ENCODE measurements at regions of chr12 and their contacts with region 1.

Region 1: GRCh38 chr12:9707864-9708808 is 24.8 kb downstream of the CLECL1 start:
- DNase-seq: peak; percentile 47 to 86 (median 68)
- ATAC-seq: peak; percentile 75 to 84 (median 82)
- H3K4me3 ChIP-seq: peak overlapping the region in 1 of 2 donors; percentile 29
- H3K4me3 Mint-ChIP-seq: peak overlapping the region; percentile 54 to 82 (median 59)
- H3K27ac ChIP-seq: peak overlapping the region; percentile 84
- H3K27ac Mint-ChIP-seq: peak overlapping the region; percentile 93 to 96
- H3K4me1 ChIP-seq: peaks cover 19 to 25% of the 10 kb centered on the region in 2 experiments
- H3K4me1 Mint-ChIP-seq: peaks cover 58 to 79% (median 65%) of the 10 kb centered on the region in 3 donors
- H3K27me3 ChIP-seq: no peaks in the 10 kb centered on the region
- H3K27me3 Mint-ChIP-seq: no peaks in the 10 kb centered on the region

Region 2: GRCh38 chr12:9604287-9604686 is 103.8 kb before region 1 on chr12:
- CTCF ChIA-PET with region 1: no interaction called
- POLR2A ChIA-PET with region 1: no interaction called
- DNase-seq: no peak
- ATAC-seq: no peak
- H3K4me3 ChIP-seq: peak overlapping the region in 1 of 2 donors; percentile 5
- H3K4me3 Mint-ChIP-seq: peak overlapping the region in 2 of 3 donors; percentile 14 to 41
- H3K27ac ChIP-seq: no peak overlapping the region
- H3K27ac Mint-ChIP-seq: peak overlapping the region; percentile 35 to 45
- H3K4me1 ChIP-seq: peaks cover 4 to 9% of the 10 kb centered on the region in 2 experiments
- H3K4me1 Mint-ChIP-seq: peaks cover 15 to 57% (median 20%) of the 10 kb centered on the region in 3 donors
- H3K27me3 ChIP-seq: no peaks in the 10 kb centered on the region
- H3K27me3 Mint-ChIP-seq: no peaks in the 10 kb centered on the region

Region 3: DNA sequence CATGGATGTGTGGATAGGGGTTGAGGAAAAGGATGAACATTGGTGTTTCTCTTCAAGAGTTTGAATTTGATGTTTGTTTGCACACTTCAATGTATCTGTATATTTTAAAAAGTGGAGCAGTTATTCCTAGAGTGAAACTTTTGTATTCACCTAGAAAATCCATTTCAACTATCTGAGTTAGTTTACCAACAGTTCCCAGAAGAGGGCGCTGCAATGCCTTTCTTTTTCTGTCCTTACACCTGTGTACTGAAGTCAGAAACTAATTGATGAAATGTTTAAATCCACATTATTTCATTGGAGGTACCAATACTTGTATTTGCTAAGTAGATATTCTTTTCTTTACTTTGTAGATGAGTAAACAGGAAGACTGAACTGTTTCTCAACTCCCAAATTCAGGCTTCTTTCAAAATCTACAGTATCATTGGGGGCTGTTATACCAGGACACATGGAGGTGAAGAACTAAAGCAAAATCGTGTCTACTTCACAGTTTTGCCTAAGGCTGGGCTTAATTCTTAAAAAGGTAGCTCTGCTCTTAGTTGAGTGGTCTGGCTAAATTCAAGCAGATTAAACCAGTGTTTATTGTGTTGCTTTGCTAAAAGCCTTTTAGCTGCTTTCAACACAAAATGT is 73.8 kb before region 1 on chr12:
- CTCF ChIA-PET with region 1: interaction called, 12 to 41 read pairs
- POLR2A ChIA-PET with region 1: interaction called in 1 of 2 experiments, 3 read pairs
- DNase-seq: peak; percentile 48 to 91 (median 74)
- ATAC-seq: peak; percentile 79 to 90 (median 82)
- H3K4me3 ChIP-seq: no peak overlapping the region
- H3K4me3 Mint-ChIP-seq: peak overlapping the region; percentile 17 to 54 (median 28)
- H3K27ac ChIP-seq: peak overlapping the region; percentile 48
- H3K27ac Mint-ChIP-seq: peak overlapping the region; percentile 74 to 95
- H3K4me1 ChIP-seq: peaks cover 24 to 25% of the 10 kb centered on the region in 2 experiments
- H3K4me1 Mint-ChIP-seq: peaks cover 76 to 91% (median 77%) of the 10 kb centered on the region in 3 donors
- H3K27me3 ChIP-seq: no peaks in the 10 kb centered on the region
- H3K27me3 Mint-ChIP-seq: no peaks in the 10 kb centered on the region

Region 4: GRCh38 chr12:9647825-9648700 is 60.1 kb before region 1 on chr12:
- CTCF ChIA-PET with region 1: interaction called, 3 to 14 read pairs
- POLR2A ChIA-PET with region 1: interaction called in 1 of 2 experiments, 3 read pairs
- DNase-seq: peak; percentile 82 to 95 (median 89)
- ATAC-seq: peak; percentile 76 to 80 (median 78)
- H3K4me3 ChIP-seq: peak overlapping the region; percentile 77 to 100
- H3K4me3 Mint-ChIP-seq: peak overlapping the region; percentile 90 to 95 (median 92)
- H3K27ac ChIP-seq: peak overlapping the region; percentile 91
- H3K27ac Mint-ChIP-seq: peak overlapping the region; percentile 98
- H3K4me1 ChIP-seq: peaks cover 21 to 39% of the 10 kb centered on the region in 2 experiments
- H3K4me1 Mint-ChIP-seq: peaks cover 52 to 64% (median 58%) of the 10 kb centered on the region in 3 donors
- H3K27me3 ChIP-seq: no peaks in the 10 kb centered on the region
- H3K27me3 Mint-ChIP-seq: no peaks in the 10 kb centered on the region

Region 5: GRCh38 chr12:9662500-9662899 is 45.6 kb before region 1 on chr12:
- CTCF ChIA-PET with region 1: interaction called, 3 to 12 read pairs
- POLR2A ChIA-PET with region 1: interaction called in 1 of 2 experiments, 4 read pairs
- DNase-seq: no peak
- ATAC-seq: peak; percentile 50 to 58 (median 54)
- H3K4me3 ChIP-seq: no peak overlapping the region
- H3K4me3 Mint-ChIP-seq: peak overlapping the region; percentile 13 to 63 (median 15)
- H3K27ac ChIP-seq: peak overlapping the region; percentile 30
- H3K27ac Mint-ChIP-seq: peak overlapping the region; percentile 87 to 91
- H3K4me1 ChIP-seq: peaks cover 40 to 49% of the 10 kb centered on the region in 2 experiments
- H3K4me1 Mint-ChIP-seq: peaks cover 77 to 91% (median 89%) of the 10 kb centered on the region in 3 donors
- H3K27me3 ChIP-seq: no peaks in the 10 kb centered on the region
- H3K27me3 Mint-ChIP-seq: no peaks in the 10 kb centered on the region

Measured in T-cell (primary cell).